ENCODE measurements at regions of chr17 and their contacts with region 1.

Region 1: DNA sequence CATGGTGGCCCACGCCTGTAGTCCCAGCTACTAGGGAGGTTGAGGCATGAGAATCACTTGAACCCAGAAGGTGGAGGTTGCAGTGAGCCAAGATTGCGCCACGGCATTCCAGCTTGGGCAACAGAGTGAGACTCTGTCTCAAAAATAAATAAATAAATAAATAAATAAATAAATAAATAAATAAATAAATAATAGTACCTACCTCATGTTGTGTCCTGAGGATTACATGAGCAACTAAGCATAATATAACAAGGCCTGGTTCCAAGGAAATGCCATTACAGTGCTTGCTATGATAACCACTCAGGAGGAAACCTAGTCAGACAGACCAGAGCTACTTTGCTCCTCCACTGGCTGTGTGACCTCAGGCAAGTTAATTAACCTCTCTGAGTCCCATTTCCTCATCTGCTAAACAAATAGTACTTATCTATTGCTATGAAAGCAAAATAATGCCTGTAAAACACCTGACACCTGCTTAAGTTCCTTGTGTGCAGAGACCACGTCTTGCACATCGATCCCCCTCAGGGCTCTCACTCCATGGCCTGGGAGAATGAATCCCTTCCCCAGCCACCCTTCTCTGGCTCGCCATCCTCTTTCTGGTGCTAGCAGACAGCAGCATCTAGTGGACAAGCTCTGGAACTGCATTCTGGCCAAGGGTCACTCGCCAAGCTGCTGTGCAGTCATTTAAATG is 7.5 kb downstream of the EPOP start:
- DNase-seq: peak; percentile 81
- H3K4me3 ChIP-seq: no peak overlapping the region
- H3K27ac ChIP-seq: no peak overlapping the region
- H3K4me1 ChIP-seq: no peaks in the 10 kb centered on the region
- H3K27me3 ChIP-seq: peaks cover 0 to 32% (median 26%) of the 10 kb centered on the region in 3 donors
- CTCF ChIP-seq: peak; percentile 98 to 99 (median 98)
- EP300 ChIP-seq: no peak
- POLR2A ChIP-seq: no peak

Region 2: DNA sequence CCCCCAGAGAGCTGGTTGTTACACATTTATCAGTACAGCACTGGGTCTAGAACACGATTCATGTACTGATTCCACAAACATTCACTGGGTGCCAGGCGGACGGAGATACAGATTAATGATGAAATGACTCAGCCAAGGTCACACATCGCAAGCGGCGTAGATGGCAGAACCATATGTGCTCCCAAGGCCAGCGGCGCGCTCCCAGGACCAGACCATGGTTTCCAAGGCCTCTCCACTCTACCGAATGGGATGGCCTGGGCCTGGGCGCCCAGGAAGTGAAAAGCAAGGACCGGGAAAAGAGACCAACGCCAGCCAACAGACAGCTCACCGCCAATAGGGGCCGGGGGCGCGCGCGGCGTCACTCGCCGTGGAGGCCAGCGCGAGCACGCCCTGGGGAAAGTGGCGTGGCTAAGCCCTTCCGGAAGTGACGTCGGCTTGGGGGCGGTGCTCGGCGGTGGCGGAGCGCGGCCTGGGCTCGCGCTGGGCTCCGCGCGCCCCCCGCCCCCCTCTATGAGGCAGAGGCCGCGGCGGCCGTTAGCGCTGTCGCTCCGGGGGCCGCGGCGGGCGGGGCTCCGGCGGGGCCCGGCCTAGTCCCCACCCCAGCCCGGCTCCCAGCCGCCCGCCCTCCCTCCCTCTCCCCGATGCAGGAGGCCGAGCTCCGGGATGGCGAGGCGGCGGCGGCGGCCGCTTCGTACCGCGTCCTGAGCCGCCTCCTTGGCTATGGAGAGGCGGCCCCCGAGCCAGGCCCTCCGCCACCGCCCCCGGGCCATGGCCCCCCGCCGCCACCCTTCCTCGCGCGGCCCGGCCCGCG is 315.6 kb before region 1 on chr17 and contains the start of gene SOCS7:
- intact Hi-C with region 1: loop called (anchors 10 kb)
- DNase-seq: peak; percentile 95
- H3K4me3 ChIP-seq: peak within 1 kb of the TSS; percentile 60 to 90 (median 85)
- H3K27ac ChIP-seq: peak within 1 kb of the TSS; percentile 87 to 94 (median 90)
- H3K4me1 ChIP-seq: peaks cover 0 to 43% (median 40%) of the 10 kb centered on the region in 4 donors
- H3K27me3 ChIP-seq: no peaks in the 10 kb centered on the region
- CTCF ChIP-seq: no peak
- EP300 ChIP-seq: no peak
- POLR2A ChIP-seq: peak; percentile 31 to 37
- total RNA-seq, gene SOCS7: 13.9 to 20.2 (median 17.3) TPM

Region 3: DNA sequence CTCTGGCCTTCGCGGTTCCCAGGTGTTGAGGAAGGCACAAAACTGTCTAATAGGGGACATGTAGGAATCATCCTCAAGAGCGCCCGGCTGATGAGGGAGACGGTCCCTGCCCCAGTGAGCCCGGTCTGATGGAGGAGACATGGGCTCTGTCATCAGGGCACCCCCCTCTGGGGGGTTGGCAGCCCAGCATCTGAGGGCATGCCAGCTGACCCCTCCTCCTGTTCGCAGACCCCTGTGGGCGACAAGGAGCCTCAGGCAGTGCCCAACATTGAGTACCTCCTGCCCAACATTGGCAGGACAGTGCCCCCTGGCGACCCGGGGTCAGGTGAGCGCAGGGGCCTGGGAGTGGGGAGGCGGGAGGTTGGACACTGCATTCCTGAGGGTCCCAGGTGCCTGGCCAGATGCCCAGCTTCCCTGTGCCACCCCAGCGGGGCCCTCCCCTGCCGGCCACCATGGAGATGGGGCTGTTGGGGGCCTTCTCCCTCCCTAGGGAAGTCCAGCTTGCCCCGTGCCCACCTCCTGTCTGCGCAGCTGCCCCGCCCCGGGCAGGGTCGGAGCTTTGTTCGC is 169.0 kb before region 1 on chr17:
- intact Hi-C with region 1: loop called (anchors 2 kb)
- DNase-seq: no peak
- H3K4me3 ChIP-seq: no peak overlapping the region
- H3K27ac ChIP-seq: no peak overlapping the region
- H3K4me1 ChIP-seq: no peaks in the 10 kb centered on the region
- H3K27me3 ChIP-seq: no peaks in the 10 kb centered on the region
- CTCF ChIP-seq: no peak
- EP300 ChIP-seq: no peak
- POLR2A ChIP-seq: no peak

Region 4: GRCh38 chr17:38510424-38511080 is 156.7 kb before region 1 on chr17:
- intact Hi-C with region 1: loop called (anchors 5 kb)
- DNase-seq: no peak
- H3K4me3 ChIP-seq: peak overlapping the region in 2 of 4 donors; percentile 24 to 37
- H3K27ac ChIP-seq: no peak overlapping the region
- H3K4me1 ChIP-seq: peaks cover 0 to 38% (median 27%) of the 10 kb centered on the region in 4 donors
- H3K27me3 ChIP-seq: no peaks in the 10 kb centered on the region
- CTCF ChIP-seq: no peak
- EP300 ChIP-seq: no peak
- POLR2A ChIP-seq: no peak

Region 5: GRCh38 chr17:38557836-38558727 is 109.2 kb before region 1 on chr17:
- intact Hi-C with region 1: loop called (anchors 1 kb)
- DNase-seq: peak; percentile 96
- H3K4me3 ChIP-seq: peak overlapping the region in 3 of 4 donors; percentile 26 to 43 (median 42)
- H3K27ac ChIP-seq: peak overlapping the region in 3 of 4 donors; percentile 1 to 33 (median 1)
- H3K4me1 ChIP-seq: peaks cover 0 to 31% (median 24%) of the 10 kb centered on the region in 4 donors
- H3K27me3 ChIP-seq: peaks cover 17 to 36% (median 30%) of the 10 kb centered on the region in 3 donors
- CTCF ChIP-seq: peak; percentile 87 to 90 (median 88)
- EP300 ChIP-seq: no peak
- POLR2A ChIP-seq: no peak

Region 6: DNA sequence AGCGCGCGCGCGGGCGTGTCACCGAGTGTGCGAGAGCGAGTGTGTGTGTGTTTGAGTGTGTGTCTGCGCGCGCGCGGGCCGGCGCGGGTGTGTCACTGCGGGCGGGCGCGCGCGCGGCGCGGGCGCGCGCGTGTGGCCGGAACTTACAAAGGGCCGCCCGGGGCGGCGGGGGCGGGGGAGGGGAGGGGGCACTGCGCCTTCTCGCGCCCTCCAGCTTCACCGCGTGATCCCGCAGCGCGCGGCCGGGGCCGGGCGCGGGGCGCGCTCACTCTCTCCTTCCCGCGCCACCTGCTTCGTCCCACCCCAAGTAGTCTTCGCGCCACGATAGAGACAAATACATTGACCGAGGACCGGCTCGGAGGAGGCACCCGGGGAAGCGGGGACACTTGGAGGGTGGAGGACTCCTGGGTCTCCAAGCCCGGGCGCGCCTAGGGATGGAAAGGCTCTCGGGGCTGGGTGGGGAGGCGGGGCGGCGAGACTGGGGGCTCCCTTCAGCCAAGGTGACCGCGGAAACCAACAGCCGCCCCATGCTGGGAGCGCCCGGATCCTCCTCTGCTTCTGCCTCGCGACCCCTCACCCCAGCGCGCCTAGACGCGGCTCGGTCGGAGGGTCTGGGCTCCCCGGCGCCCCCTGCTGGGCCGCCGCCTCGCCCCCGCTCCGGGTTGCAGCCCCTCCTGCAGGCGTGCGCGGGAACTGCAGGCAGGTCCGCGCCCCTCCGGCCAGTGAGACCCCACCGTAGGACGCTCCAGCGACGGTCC is 61.2 kb before region 1 on chr17 and contains the start of gene SRCIN1:
- intact Hi-C with region 1: loop called (anchors 5 kb)
- DNase-seq: peak; percentile 73
- H3K4me3 ChIP-seq: peak within 1 kb of the TSS; percentile 40 to 63 (median 58)
- H3K27ac ChIP-seq: peak within 1 kb of the TSS in 3 of 4 donors; percentile 51 to 63 (median 54)
- H3K4me1 ChIP-seq: peaks cover 0 to 53% (median 42%) of the 10 kb centered on the region in 4 donors
- H3K27me3 ChIP-seq: peaks cover 0 to 53% (median 40%) of the 10 kb centered on the region in 3 donors
- CTCF ChIP-seq: peak; percentile 56 to 79 (median 60)
- EP300 ChIP-seq: no peak
- POLR2A ChIP-seq: no peak
- total RNA-seq, gene SRCIN1: 0.81 to 9.4 (median 1.7) TPM

Region 7: GRCh38 chr17:38719943-38720641 is 52.8 kb after region 1 on chr17:
- intact Hi-C with region 1: no loop called
- DNase-seq: no peak
- H3K4me3 ChIP-seq: no peak overlapping the region
- H3K27ac ChIP-seq: peak overlapping the region in 1 of 4 donors; percentile 1
- H3K4me1 ChIP-seq: peaks cover 0 to 11% (median 10%) of the 10 kb centered on the region in 4 donors
- H3K27me3 ChIP-seq: no peaks in the 10 kb centered on the region
- CTCF ChIP-seq: no peak
- EP300 ChIP-seq: no peak
- POLR2A ChIP-seq: no peak